Activated T-helper 2 cell treated with anti-CD3 and anti-CD28 coated beads, Interferon-gamma antibody, Interleukin-2, Interleukin-4, amounts not matched to agents 10 μg/mL and 5 μg/mL and 100 μg/mL, durations not matched to agents 14 hours and 24 hours and 36 hours (primary cell): ENCODE measurements at regions of chr7 and their contacts with region 1.

Region 1: DNA sequence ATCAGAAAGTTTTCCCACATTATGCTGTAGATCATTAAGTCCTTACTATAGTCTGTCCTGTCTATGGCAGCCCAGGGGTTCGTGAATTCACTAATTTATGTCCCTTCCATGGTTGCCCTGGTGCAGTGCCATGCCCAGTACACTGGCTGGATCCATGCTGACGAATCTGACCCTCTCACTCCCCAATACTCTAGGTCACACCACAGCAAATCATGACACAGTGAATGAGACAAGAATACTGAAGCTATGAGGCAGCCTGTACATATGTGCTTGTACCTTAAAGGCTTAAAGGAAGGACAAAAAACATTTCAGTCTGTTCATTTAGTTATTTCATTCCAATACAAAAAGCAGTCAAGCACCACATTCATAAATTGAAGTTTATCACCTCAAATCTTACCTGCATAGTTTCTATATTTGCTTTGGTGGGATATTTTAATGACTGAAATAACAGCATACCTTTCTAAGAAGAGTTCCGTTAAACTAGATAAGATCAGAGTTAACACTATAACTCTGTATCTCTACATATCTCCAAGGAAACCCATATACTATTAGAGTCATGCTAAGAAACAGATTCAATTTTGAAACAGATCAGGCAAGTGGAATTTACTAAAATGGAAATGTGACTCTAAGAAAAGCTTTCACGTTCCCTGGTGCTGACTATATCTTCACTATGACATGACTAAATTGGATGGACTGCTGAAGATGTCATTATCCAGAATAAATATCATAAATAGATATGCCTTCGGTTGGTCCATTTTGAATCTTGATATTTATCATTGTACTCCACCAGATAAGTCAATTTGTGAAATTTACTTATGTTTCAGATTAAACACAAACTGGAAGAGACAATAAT is 36.7 kb downstream of the OSBPL3 start:
- DNase-seq: no peak
- H3K4me3 Mint-ChIP-seq: no peak overlapping the region
- H3K27ac Mint-ChIP-seq: peak overlapping the region; percentile 35
- H3K4me1 Mint-ChIP-seq: peaks cover 73% of the 10 kb centered on the region
- H3K27me3 Mint-ChIP-seq: no peaks in the 10 kb centered on the region

Region 2: DNA sequence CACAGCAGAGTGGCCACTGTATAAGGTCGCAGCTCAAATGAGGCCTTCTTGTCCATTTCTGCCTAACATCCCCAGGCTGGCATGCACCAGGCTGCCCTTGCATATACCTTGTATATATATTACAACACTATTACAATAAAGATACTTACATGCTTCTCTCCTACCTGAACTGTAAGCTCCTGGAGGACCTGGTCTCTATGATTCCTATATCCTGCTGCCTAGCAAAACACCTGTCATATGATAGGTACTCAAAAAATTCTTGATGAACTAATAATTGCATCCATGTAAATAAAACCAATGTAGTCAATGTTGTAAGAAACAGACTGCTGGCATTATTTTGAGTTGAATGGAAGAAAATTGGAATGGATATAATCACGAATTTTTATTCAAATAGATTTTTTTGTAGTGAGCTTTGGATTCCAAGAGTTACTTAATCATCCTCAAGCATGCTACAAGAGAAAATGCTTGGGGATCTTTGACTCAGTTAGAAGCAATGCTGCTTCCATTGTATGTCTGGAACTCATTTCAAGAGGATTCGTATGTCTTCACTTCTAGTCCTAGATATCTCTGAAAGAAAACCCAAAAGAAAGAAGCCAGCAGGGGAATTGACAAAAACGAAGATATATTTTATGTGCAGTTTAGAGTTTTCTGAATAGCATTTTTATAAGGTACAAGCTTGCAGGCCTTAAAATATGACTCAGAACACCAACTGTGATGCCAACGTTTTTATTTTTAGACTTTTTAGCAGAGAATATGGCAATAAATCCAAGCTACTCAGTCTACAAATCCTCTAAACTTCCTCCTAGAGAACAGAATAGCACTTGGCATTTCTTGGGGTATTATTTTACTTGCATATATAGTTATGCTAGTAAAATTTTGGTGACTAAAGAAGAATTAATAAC is 16.4 kb before region 1 on chr7:
- intact Hi-C with region 1: loop called (anchors 2 kb)
- DNase-seq: no peak
- H3K4me3 Mint-ChIP-seq: no peak overlapping the region
- H3K27ac Mint-ChIP-seq: no peak overlapping the region
- H3K4me1 Mint-ChIP-seq: peaks cover 81% of the 10 kb centered on the region
- H3K27me3 Mint-ChIP-seq: no peaks in the 10 kb centered on the region

Region 3: DNA sequence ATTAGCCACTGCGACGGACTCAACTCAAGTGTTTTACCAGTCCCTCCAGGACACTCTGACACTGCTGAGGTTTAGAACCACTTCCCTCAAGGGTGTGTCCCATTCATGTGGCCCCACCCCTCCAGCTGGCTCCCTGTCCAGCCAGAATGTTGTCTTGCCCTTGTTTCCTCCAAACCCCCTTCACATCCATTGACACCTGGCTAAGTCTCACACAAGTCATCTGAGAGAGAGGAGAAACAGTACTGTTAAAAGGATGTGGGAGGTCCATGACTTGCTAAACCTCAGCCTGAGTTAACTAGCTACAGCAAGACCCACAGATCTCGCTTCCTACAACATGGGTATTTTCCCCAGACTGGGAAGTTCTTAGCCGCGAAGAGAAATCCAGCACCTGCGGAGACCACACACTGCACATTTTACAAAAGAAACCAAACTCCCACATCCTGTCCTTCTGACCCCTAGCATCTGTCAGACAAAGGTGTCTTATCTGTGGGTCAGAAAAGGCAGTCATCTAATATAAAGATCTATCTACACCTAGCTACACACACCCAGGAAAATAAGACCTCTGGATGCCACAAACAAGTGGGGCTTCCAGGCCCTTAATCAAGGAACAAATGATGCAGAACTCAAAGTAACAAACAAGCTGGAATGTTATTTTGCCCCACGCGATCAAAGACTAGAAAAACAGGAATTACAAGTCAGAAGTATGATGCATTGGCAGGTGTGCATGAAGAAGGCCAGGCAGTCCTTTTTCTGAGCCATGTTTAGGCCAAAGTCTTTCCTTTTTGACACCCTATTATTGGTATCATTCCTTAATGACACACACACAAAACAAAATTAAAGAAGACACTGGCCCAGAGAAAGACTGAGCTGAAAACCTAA is 22.7 kb after region 1 on chr7:
- intact Hi-C with region 1: loop called (anchors 2 kb)
- DNase-seq: peak; percentile 60
- H3K4me3 Mint-ChIP-seq: peak overlapping the region; percentile 31
- H3K27ac Mint-ChIP-seq: peak overlapping the region; percentile 80
- H3K4me1 Mint-ChIP-seq: peaks cover 79% of the 10 kb centered on the region
- H3K27me3 Mint-ChIP-seq: no peaks in the 10 kb centered on the region

Region 4: GRCh38 chr7:25369786-25370185 is 426.5 kb after region 1 on chr7:
- intact Hi-C with region 1: no loop called
- DNase-seq: no peak
- H3K4me3 Mint-ChIP-seq: no peak overlapping the region
- H3K27ac Mint-ChIP-seq: no peak overlapping the region
- H3K4me1 Mint-ChIP-seq: no peaks in the 10 kb centered on the region
- H3K27me3 Mint-ChIP-seq: no peaks in the 10 kb centered on the region